Activated CD4-positive, alpha-beta T cell treated with anti-CD3 and anti-CD28 coated beads, Interleukin-2, amount 10 ng/mL, durations not matched to agents 24 days and 14 days (primary cell): ENCODE measurements at regions of chr13 and their contacts with region 1.

Region 1: DNA sequence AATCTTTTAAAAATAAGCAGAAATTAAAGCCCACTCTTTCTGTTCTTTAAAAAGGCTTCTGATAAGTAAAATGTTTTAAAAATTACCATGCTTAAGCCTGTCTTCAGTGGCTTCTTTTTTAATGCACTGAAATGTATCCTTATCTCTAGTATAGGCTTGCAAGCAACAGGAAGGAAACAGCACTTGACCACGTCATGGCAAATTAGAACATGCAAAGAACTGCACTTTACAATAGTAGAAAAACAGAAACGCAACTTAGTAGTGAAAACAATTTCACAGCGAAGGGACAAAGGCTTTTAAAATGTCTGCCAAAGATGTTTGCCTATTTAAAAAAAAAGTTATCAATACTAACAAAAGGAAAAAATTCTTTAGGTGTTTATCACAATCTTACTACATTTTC is 36.3 kb downstream of the ELF1 start:
- DNase-seq: peak; percentile 90
- H3K4me3 Mint-ChIP-seq: peak overlapping the region; percentile 76
- H3K27ac Mint-ChIP-seq: peak overlapping the region; percentile 91
- H3K4me1 Mint-ChIP-seq: peaks cover 56% of the 10 kb centered on the region
- H3K27me3 Mint-ChIP-seq: no peaks in the 10 kb centered on the region

Region 2: GRCh38 chr13:40922437-40923040 is 60.2 kb before region 1 on chr13:
- intact Hi-C with region 1: loop called (anchors 1 kb)
- DNase-seq: no peak
- H3K4me3 Mint-ChIP-seq: peak overlapping the region; percentile 73
- H3K27ac Mint-ChIP-seq: peak overlapping the region; percentile 80
- H3K4me1 Mint-ChIP-seq: peaks cover 13% of the 10 kb centered on the region
- H3K27me3 Mint-ChIP-seq: no peaks in the 10 kb centered on the region

Region 3: DNA sequence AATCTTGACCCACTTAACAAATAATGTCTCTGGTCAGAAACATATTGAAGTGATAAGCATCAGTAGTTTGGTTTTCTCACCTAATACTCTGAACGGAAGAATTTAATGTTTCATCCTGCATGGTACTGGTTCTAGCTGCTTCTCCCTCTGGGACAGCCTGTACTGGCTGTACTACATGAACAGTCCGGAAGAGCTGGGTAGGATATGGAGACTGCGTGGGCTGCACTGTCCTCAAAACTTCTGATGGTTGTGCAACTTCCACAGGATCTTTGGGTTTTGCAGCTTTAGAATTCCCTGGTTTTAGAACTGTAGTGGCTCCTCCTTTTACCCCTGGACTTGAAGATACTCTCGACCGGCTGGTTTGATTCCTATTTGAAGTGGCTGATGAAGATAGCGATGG is 41.9 kb before region 1 on chr13:
- intact Hi-C with region 1: no loop called
- DNase-seq: no peak
- H3K4me3 Mint-ChIP-seq: no peak overlapping the region
- H3K27ac Mint-ChIP-seq: no peak overlapping the region
- H3K4me1 Mint-ChIP-seq: peaks cover 8% of the 10 kb centered on the region
- H3K27me3 Mint-ChIP-seq: no peaks in the 10 kb centered on the region

Region 4: DNA sequence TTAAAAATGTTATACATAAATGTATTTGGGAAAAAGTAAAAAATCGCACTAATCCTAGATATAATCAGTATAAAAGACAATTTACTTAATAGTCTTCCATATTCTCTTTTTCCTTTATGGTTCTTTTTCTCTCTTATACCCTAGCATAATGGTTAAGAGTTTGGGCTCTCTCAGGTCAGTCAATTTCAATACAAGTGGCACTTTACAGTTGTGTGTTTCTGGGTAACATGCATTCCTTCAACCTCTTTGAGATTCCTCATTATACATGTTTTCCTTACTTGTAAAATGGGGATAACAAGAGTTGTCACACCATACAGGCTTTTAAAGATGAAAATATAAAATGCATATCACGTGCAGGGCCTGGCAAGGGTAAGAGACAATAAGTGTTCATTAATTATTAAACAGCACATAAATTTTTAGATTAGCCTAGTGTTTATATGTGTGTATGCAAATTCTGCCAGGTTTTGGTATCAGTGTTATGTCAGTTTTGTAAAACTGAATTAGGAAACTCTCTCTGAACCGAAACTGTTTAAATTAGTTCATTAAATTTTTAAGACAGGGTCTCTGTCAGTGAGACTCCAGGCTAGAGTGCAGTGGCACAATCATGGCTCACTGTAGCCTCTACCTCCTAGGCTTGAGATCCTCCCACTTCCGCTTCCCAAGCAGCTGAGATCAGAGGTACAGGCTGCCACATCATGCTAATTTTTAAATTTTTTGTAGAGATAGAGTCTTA is 13.4 kb before region 1 on chr13:
- intact Hi-C with region 1: loop called (anchors 1 kb)
- DNase-seq: peak; percentile 71
- H3K4me3 Mint-ChIP-seq: peak overlapping the region; percentile 49
- H3K27ac Mint-ChIP-seq: peak overlapping the region; percentile 79
- H3K4me1 Mint-ChIP-seq: peaks cover 58% of the 10 kb centered on the region
- H3K27me3 Mint-ChIP-seq: no peaks in the 10 kb centered on the region

Region 5: GRCh38 chr13:40994581-40995189 is 11.9 kb after region 1 on chr13:
- intact Hi-C with region 1: loop called (anchors 1 kb)
- DNase-seq: no peak
- H3K4me3 Mint-ChIP-seq: peak overlapping the region; percentile 69
- H3K27ac Mint-ChIP-seq: peak overlapping the region; percentile 79
- H3K4me1 Mint-ChIP-seq: peaks cover 67% of the 10 kb centered on the region
- H3K27me3 Mint-ChIP-seq: no peaks in the 10 kb centered on the region

Region 6: DNA sequence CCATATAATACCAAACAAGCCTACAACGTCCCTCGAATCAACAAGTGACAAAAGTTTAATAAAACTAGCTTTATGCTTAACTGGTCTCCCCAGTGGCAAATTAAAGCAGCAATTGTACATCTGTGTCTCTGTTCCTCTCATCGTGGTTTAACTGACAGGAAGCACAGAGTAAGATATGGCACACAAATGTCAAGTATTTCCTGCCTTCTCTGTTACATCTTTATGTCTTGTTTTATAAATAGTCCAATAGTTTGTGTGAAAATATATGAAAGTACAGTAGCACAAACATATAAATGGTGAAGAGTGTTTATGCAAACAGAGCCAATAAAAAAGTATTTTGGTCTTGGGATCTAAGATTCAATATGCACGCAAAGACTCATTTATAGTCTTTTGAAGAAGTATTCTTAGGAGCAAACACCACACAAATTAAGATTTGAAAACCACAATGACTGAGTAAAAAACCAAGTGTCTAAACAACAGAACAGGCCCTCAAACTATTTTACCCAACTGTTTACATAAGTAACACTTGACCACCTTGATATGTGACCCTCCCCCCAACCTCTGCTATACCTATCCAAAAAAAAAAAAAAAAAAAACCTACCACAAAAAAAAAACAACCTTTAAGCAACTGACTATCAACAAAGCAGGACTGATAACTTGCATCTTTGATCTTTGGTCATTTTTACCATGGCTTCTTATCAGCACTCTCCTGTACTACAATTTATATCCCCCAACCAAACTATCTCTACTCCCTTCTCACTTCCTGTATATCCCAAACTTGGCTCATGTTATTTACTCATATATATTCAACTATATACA is 22.3 kb after region 1 on chr13:
- intact Hi-C with region 1: loop called (anchors 1 kb)
- DNase-seq: peak; percentile 82
- H3K4me3 Mint-ChIP-seq: peak overlapping the region; percentile 74
- H3K27ac Mint-ChIP-seq: peak overlapping the region; percentile 84
- H3K4me1 Mint-ChIP-seq: peaks cover 54% of the 10 kb centered on the region
- H3K27me3 Mint-ChIP-seq: no peaks in the 10 kb centered on the region

Region 7: DNA sequence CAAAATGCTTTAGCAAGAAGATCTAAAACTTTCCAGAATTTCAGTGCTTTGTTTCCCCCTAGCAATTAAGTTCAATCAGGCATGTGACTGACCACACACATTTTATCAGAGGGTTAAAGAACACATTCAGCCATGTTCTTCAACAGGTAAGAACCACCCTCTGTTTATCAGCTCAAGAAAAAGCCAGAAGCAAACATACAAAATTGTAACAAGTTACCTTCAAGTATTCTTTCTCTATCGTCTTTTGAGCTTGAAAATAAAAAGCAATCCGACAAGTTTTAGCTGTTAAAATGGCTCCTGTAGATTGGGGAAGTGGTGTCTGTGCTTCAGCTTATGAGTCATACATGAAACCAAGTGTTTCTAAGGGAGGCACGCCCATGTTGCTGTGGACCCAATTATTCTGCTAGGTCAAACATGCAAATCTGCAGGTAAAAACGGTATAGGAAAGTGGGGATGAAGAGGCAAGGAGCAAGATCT is 36.3 kb after region 1 on chr13 and contains the start of gene ELF1:
- intact Hi-C with region 1: loop called (anchors 1 kb)
- DNase-seq: peak; percentile 89
- H3K4me3 Mint-ChIP-seq: peak within 1 kb of the TSS; percentile 95
- H3K27ac Mint-ChIP-seq: peak within 1 kb of the TSS; percentile 98
- H3K4me1 Mint-ChIP-seq: peaks cover 40% of the 10 kb centered on the region
- H3K27me3 Mint-ChIP-seq: no peaks in the 10 kb centered on the region
- total RNA-seq, gene ELF1: 65.0 and 65.8 TPM in 2 replicates

Region 8: DNA sequence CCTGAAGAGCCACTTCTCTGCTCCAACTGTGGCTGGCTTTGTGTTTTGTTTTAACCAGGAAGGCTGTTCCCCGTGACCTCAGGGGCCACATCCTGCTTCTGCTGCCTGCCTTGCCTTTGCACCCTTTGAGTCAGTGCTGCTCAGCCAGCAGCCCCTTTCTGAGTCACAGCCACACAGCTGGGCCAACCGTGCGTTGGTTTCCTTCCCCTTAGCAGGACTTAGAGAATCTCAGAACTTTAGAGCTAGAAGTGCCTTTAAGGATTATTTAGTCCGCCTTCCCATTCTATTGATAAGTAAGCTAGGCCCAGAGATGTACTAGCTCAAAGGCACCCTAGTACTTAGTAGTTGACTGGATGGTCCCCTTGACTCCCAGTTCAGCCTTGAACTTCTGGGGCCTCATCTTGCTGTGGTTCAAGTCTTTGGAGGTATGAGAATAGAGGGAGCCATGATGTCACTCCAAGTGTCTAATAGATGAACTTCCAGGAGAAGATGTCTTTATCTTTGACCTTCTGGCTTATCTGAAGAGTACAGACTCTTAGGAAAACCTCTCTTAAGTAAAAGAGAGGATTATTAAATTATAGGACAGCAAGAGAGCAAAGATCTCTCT is 482.6 kb after region 1 on chr13:
- intact Hi-C with region 1: loop called (anchors 10 kb)
- DNase-seq: peak; percentile 96
- H3K4me3 Mint-ChIP-seq: peak overlapping the region; percentile 88
- H3K27ac Mint-ChIP-seq: peak overlapping the region; percentile 99
- H3K4me1 Mint-ChIP-seq: peaks cover 79% of the 10 kb centered on the region
- H3K27me3 Mint-ChIP-seq: no peaks in the 10 kb centered on the region

Region 9: GRCh38 chr13:41546372-41547190 is 563.8 kb after region 1 on chr13:
- intact Hi-C with region 1: no loop called
- DNase-seq: no peak
- H3K4me3 Mint-ChIP-seq: no peak overlapping the region
- H3K27ac Mint-ChIP-seq: no peak overlapping the region
- H3K4me1 Mint-ChIP-seq: peaks cover 21% of the 10 kb centered on the region
- H3K27me3 Mint-ChIP-seq: no peaks in the 10 kb centered on the region